H1 (cell line): ENCODE measurements at regions of chr6 and their contacts with region 1.

Region 1: GRCh38 chr6:42104095-42104806 is 38.2 kb downstream of the C6orf132 start:
- DNase-seq: peak; percentile 51 to 93
- H3K4me3 ChIP-seq: peak overlapping the region; percentile 3 to 57 (median 32); a peak in 6 of 8 replicates
- H3K27ac ChIP-seq: no peak overlapping the region
- H3K4me1 ChIP-seq: peaks cover 1 to 9% (median 4%) of the 10 kb centered on the region in 4 experiments; a peak in 6 of 7 replicates
- H3K27me3 ChIP-seq: no peaks in the 10 kb centered on the region; a peak in 2 of 7 replicates
- CTCF ChIP-seq: peak in 2 of 3 experiments; percentile 70 to 89; a peak in 3 of 4 replicates
- EP300 ChIP-seq: no peak
- POLR2A ChIP-seq: no peak
- RAD21 ChIP-seq: peak; percentile 52 to 58

Region 2: DNA sequence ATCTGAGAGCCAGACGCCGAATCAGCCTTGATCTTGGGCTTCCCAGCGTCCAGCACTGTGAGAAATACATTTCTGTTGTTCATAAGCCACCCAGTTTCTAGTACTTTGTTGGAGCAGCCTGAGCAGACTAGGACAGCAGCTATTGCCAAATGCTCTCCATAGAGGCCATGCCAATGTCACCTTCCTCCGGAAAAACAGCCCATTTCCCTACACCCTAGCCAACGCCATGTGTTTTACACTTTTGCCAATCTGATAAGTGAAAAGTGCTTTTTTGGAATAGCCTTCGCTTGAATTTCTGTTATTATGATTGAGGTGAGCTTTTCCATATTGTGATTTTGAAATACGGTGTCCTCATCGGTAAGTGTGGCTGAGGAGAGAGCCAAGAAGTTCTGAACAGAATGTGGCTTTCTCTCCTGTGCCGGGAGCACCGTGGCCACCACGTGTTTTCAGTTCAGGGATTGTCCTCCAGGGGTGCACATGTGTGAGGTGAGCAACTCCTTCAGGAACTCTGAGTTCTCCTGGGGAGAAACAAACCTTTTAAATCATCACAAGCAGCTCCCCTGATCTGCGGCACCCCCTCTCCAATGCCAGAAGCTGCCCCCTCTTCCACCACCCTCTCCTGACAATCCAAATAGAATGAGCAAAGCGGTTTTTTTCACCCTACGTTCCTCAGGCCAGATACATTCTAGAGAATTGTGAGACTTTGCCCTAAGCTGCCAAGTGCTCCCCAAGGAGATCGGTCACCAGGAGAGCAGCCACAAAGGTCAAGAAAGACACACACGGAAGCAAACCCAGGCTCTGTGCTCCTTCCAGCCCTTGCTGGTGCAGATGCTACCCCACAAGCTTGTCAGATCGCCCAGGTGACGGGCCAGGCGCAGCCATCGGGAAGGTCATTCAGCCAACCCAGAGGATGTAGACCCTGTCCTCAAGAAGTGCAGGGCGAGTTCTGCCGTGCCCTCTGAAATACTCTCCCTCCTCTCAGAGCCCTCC is 17.9 kb before region 1 on chr6:
- CTCF ChIA-PET with region 1: interaction called, 313 read pairs
- POLR2A ChIA-PET with region 1: interaction called, 4 read pairs
- DNase-seq: no peak
- H3K4me3 ChIP-seq: no peak overlapping the region
- H3K27ac ChIP-seq: no peak overlapping the region
- H3K4me1 ChIP-seq: peaks cover 0 to 6% (median 0%) of the 10 kb centered on the region in 4 experiments; a peak in 1 of 7 replicates
- H3K27me3 ChIP-seq: peaks cover 0 to 7% (median under 1%) of the 10 kb centered on the region in 4 experiments; a peak in 4 of 7 replicates
- CTCF ChIP-seq: peak; percentile 45 to 63 (median 45); a peak in 3 of 4 replicates
- EP300 ChIP-seq: no peak
- POLR2A ChIP-seq: no peak
- RAD21 ChIP-seq: peak; percentile 14 to 38; a peak in 3 of 4 replicates

Region 3: GRCh38 chr6:42131531-42131930 is 27.3 kb after region 1 on chr6:
- CTCF ChIA-PET with region 1: interaction called, 30 read pairs
- POLR2A ChIA-PET with region 1: interaction called, 50 read pairs
- DNase-seq: no peak
- H3K4me3 ChIP-seq: no peak overlapping the region
- H3K27ac ChIP-seq: no peak overlapping the region
- H3K4me1 ChIP-seq: peaks cover 8 to 28% (median 15%) of the 10 kb centered on the region in 4 experiments
- H3K27me3 ChIP-seq: no peaks in the 10 kb centered on the region
- CTCF ChIP-seq: no peak
- EP300 ChIP-seq: no peak
- POLR2A ChIP-seq: no peak
- RAD21 ChIP-seq: no peak

Region 4: GRCh38 chr6:42142118-42142931 is 38.1 kb after region 1 on chr6 and contains the start of gene C6orf132:
- CTCF ChIA-PET with region 1: interaction called, 22 read pairs
- POLR2A ChIA-PET with region 1: interaction called, 50 read pairs
- DNase-seq: peak; percentile 46 to 86
- H3K4me3 ChIP-seq: peak within 1 kb of the TSS; percentile 78 to 94 (median 90)
- H3K27ac ChIP-seq: peak within 1 kb of the TSS; percentile 80
- H3K4me1 ChIP-seq: peaks cover 17 to 32% (median 30%) of the 10 kb centered on the region in 4 experiments
- H3K27me3 ChIP-seq: no peaks in the 10 kb centered on the region
- CTCF ChIP-seq: no peak
- EP300 ChIP-seq: 0 out of 3 replicates have a peak, but pooled peaks of 1 of the 2 experiments have one; percentile 62
- POLR2A ChIP-seq: peak in 1 of 2 experiments; percentile 81; a peak in 2 of 3 replicates
- RAD21 ChIP-seq: no peak
- total RNA-seq, gene C6orf132: 62.2 and 64.0 TPM in 2 replicates

Region 5: DNA sequence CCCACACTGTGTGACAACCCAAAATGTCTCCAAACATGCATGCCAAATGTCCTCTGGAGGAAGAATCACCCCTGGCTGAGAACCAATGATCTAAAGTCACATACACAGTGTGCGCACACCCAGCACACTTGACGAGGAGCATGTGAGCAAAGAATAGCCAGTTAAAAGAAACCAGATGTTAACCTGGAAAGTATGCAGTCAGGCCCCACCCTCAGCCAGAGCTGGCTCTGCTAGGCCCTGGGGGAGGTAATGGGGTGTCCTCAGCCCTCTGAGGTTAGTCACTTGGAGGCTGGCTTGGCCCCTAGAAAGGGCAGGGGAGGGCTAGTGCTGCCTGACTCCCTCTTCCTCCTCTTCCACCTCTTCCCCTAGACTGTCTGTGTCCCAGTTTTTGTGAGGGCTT is 53.8 kb after region 1 on chr6:
- CTCF ChIA-PET with region 1: interaction called, 224 read pairs
- POLR2A ChIA-PET with region 1: interaction called, 11 read pairs
- DNase-seq: no peak
- H3K4me3 ChIP-seq: no peak overlapping the region
- H3K27ac ChIP-seq: no peak overlapping the region
- H3K4me1 ChIP-seq: peaks cover 0 to 14% (median 8%) of the 10 kb centered on the region in 4 experiments
- H3K27me3 ChIP-seq: peaks cover 0 to 3% (median 0%) of the 10 kb centered on the region in 4 experiments; a peak in 3 of 7 replicates
- CTCF ChIP-seq: no peak
- EP300 ChIP-seq: no peak
- POLR2A ChIP-seq: no peak
- RAD21 ChIP-seq: no peak

Region 6: GRCh38 chr6:42190554-42191183 is 86.4 kb after region 1 on chr6:
- CTCF ChIA-PET with region 1: interaction called, 11 read pairs
- POLR2A ChIA-PET with region 1: interaction called, 3 read pairs
- DNase-seq: no peak
- H3K4me3 ChIP-seq: no peak overlapping the region
- H3K27ac ChIP-seq: no peak overlapping the region
- H3K4me1 ChIP-seq: peaks cover 2 to 6% (median 4%) of the 10 kb centered on the region in 4 experiments
- H3K27me3 ChIP-seq: peaks cover 0 to 3% (median 0%) of the 10 kb centered on the region in 4 experiments; a peak in 1 of 7 replicates
- CTCF ChIP-seq: no peak
- EP300 ChIP-seq: no peak
- POLR2A ChIP-seq: no peak
- RAD21 ChIP-seq: no peak